Natural killer cell (primary cell): ENCODE measurements at regions of chr11 and their contacts with region 1.

Region 1: GRCh38 chr11:2269601-2270321 is 627 bp downstream of the ASCL2 start:
- DNase-seq: peak; percentile 56 to 82
- ATAC-seq: peak; percentile 41 to 54 (median 51)
- H3K4me3 ChIP-seq: peak overlapping the region; percentile 49
- H3K4me3 Mint-ChIP-seq: peak overlapping the region; percentile 86
- H3K27ac ChIP-seq: peak overlapping the region; percentile 49
- H3K27ac Mint-ChIP-seq: peak overlapping the region in 1 of 2 donors; percentile 77
- H3K4me1 ChIP-seq: peaks cover 56% of the 10 kb centered on the region
- H3K4me1 Mint-ChIP-seq: peaks cover 30 to 49% of the 10 kb centered on the region in 2 donors
- H3K27me3 ChIP-seq: peaks cover 2% of the 10 kb centered on the region
- H3K27me3 Mint-ChIP-seq: no peaks in the 10 kb centered on the region
- CTCF ChIP-seq: peak; percentile 27

Region 2: DNA sequence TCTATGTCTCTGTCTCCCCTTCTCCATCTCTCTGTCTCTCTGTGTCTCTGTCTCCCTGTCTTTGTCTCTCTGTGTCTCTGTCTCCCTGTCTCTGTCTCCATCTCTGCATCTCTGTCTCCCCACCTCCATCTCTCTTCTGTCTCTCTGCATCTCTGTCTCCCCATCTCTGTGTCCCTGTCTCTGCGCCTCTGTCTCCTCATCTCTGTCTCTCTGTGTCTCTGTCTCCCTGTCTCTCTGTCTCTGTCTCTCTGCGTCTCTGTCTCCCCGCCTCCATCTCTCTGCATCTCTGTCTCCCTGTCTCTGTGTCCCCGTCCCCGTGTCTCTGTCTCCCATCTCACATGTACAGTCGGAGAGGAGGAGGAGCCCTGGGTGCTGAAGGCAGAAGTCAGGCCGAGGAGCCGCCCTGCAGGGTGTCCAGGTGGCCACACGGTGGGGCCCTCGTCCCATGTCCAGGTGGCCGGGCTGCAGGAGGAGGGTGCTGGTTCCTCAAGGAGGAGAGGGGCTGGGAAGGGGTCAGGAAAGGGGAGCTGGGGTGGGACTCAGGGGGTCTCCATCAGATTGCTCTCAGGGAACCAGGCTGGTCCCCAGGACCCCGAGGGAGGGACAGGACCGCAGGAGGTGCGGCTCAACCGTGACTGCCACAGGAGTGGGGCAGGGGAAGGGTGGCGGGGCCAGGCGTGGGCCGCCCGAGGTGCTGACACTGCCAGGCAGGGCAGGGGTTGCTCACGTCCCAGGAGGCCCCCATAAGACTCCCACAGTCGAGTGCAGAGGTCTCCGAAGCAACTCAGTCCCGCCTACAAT is 72.6 kb before region 1 on chr11:
- intact Hi-C with region 1: loop called (anchors 2 kb)
- DNase-seq: peak; percentile 74 to 84
- ATAC-seq: peak; percentile 85 to 98 (median 96)
- H3K4me3 ChIP-seq: no peak overlapping the region
- H3K4me3 Mint-ChIP-seq: no peak overlapping the region
- H3K27ac ChIP-seq: no peak overlapping the region
- H3K27ac Mint-ChIP-seq: no peak overlapping the region
- H3K4me1 ChIP-seq: peaks cover 33% of the 10 kb centered on the region
- H3K4me1 Mint-ChIP-seq: peaks cover 0 to 28% of the 10 kb centered on the region in 2 donors
- H3K27me3 ChIP-seq: no peaks in the 10 kb centered on the region
- H3K27me3 Mint-ChIP-seq: peaks cover 0 to 12% of the 10 kb centered on the region in 2 donors
- CTCF ChIP-seq: peak; percentile 83

Region 3: DNA sequence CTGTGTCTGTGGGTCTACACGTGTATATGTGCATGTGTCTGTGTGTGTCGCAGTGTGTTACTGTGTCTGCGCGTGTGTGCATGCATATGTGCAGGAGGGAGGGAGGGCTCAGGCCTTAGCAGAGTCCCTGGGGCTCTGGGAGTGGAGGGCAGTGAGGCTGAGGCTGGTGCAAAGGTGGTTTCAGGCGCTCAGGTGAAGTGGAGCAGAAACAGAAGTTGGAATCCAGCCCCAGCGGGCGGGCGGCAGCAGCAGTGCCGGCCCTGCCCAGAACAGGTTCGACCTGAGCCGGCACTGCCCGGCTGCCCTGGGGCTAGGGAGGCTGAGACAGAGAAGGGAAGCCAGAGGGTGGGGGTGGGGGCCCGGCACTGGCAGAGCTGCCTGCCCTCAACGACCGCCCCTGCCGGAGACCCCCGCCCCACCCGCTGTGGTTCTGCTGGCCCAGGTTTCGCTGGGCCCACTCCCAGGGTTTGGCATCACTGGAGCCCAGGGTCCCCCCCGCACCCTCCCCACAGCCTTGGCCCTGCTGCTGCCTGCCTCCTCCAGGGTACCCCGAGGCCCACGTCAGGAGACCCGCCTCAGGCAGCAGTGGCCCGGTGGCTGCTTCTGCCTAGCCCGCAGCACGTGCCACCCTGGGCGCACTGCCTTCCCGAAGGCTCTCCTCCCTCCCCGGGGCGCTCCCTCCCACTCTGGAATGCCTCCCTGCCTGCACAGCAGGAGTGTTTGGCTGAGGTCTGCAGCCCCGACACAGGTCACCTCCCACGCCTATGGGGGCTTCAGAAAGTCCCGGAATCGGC is 12.6 kb before region 1 on chr11:
- intact Hi-C with region 1: no loop called
- DNase-seq: no peak
- ATAC-seq: no peak
- H3K4me3 ChIP-seq: no peak overlapping the region
- H3K4me3 Mint-ChIP-seq: no peak overlapping the region
- H3K27ac ChIP-seq: no peak overlapping the region
- H3K27ac Mint-ChIP-seq: no peak overlapping the region
- H3K4me1 ChIP-seq: no peaks in the 10 kb centered on the region
- H3K4me1 Mint-ChIP-seq: no peaks in the 10 kb centered on the region
- H3K27me3 ChIP-seq: no peaks in the 10 kb centered on the region
- H3K27me3 Mint-ChIP-seq: no peaks in the 10 kb centered on the region
- CTCF ChIP-seq: no peak